ENCODE measurements at regions of chr17 and their contacts with region 1.

Region 1: GRCh38 chr17:17280613-17281549 is at the start of gene COPS3:
- DNase-seq: peak; percentile 88 to 99
- H3K4me3 ChIP-seq: peak within 1 kb of the TSS; percentile 88 to 92
- H3K27ac ChIP-seq: peak within 1 kb of the TSS; percentile 97 to 98
- H3K4me1 ChIP-seq: peaks cover 5 to 14% of the 10 kb centered on the region in 2 donors
- H3K27me3 ChIP-seq: no peaks in the 10 kb centered on the region
- CTCF ChIP-seq: no peak
- total RNA-seq, gene COPS3: 36.6 TPM

Region 2: DNA sequence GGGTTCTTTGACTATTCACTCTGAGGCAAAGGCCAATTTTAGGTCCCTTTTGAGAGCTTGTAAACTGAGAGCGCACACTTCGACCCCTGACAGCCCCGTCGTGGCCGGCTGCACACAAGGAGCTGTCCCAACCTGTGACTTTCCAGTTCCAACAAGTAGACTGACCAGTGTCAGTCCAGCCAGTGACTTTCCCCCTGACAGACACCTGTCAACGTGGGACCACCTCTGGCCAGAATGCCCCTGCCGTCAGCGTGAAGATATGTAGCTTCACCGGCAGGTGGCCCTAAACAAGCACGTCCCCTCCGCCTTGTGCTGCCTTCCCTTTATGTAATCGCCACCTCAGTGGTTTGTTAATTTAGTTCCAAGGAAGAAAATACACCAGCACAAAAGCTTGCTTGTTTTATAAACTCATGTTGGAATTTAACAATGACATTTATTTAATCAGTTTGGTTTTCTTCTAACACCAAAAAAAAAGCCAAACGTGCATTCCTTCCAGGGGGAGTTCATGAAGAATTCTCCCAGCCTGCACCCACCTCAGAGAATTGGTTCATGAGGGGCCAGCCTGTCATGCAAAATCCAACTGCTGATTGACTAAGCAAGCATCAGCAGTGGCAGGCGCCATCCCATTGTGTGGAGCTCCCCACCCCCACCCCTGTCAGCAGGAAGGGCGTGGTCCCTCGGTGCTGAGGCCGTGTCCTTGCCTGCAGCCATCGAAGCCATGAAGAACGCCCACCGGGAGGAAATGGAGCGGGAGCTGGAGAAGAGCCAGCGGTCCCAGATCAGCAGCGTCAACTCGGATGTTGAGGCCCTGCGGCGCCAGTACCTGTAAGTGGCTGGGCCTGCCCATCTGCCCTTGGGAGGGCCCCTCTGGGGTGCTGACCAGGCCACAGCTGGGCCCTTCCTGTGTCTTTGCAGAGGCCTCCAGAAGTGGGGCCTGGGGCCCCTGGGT is 108.6 kb before region 1 on chr17:
- intact Hi-C with region 1: no loop called
- DNase-seq: no peak
- H3K4me3 ChIP-seq: no peak overlapping the region
- H3K27ac ChIP-seq: no peak overlapping the region
- H3K4me1 ChIP-seq: no peaks in the 10 kb centered on the region
- H3K27me3 ChIP-seq: no peaks in the 10 kb centered on the region
- CTCF ChIP-seq: no peak

Region 3: GRCh38 chr17:17258998-17259397 is 21.9 kb before region 1 on chr17:
- intact Hi-C with region 1: no loop called
- DNase-seq: no peak
- H3K4me3 ChIP-seq: no peak overlapping the region
- H3K27ac ChIP-seq: no peak overlapping the region
- H3K4me1 ChIP-seq: no peaks in the 10 kb centered on the region
- H3K27me3 ChIP-seq: no peaks in the 10 kb centered on the region
- CTCF ChIP-seq: no peak

Region 4: GRCh38 chr17:17303010-17303846 is 22.3 kb after region 1 on chr17 and contains the start of gene NT5M:
- intact Hi-C with region 1: loop called (anchors 1 kb)
- DNase-seq: peak in 1 of 2 donors; percentile 84
- H3K4me3 ChIP-seq: peak within 1 kb of the TSS; percentile 70 to 73
- H3K27ac ChIP-seq: peak within 1 kb of the TSS; percentile 15 to 54
- H3K4me1 ChIP-seq: peaks cover 0 to 6% of the 10 kb centered on the region in 2 donors
- H3K27me3 ChIP-seq: no peaks in the 10 kb centered on the region
- CTCF ChIP-seq: no peak
- total RNA-seq, gene NT5M: 4.6 TPM